ENCODE measurements at regions of chr7 and their contacts with region 1.

Region 1: GRCh38 chr7:36670585-36671431 is 53.5 kb downstream of the AOAH start:
- DNase-seq: peak; percentile 27
- H3K4me3 ChIP-seq: no peak overlapping the region
- H3K27ac ChIP-seq: no peak overlapping the region
- H3K27me3 ChIP-seq: peaks cover 2% of the 10 kb centered on the region
- CTCF ChIP-seq: peak; percentile 98

Region 2: GRCh38 chr7:36264123-36264801 is 406.5 kb before region 1 on chr7:
- CTCF ChIA-PET with region 1: no interaction called
- POLR2A ChIA-PET with region 1: no interaction called
- DNase-seq: no peak
- H3K4me3 ChIP-seq: no peak overlapping the region
- H3K27ac ChIP-seq: no peak overlapping the region
- H3K27me3 ChIP-seq: no peaks in the 10 kb centered on the region
- CTCF ChIP-seq: no peak

Region 3: GRCh38 chr7:36456548-36456947 is 214.3 kb before region 1 on chr7:
- CTCF ChIA-PET with region 1: interaction called, 11 read pairs
- POLR2A ChIA-PET with region 1: no interaction called
- DNase-seq: no peak
- H3K4me3 ChIP-seq: no peak overlapping the region
- H3K27ac ChIP-seq: no peak overlapping the region
- H3K27me3 ChIP-seq: no peaks in the 10 kb centered on the region
- CTCF ChIP-seq: no peak

Region 4: GRCh38 chr7:36487756-36488336 is 183.0 kb before region 1 on chr7:
- CTCF ChIA-PET with region 1: interaction called, 282 read pairs
- POLR2A ChIA-PET with region 1: interaction called, 6 read pairs
- DNase-seq: peak; percentile 8
- H3K4me3 ChIP-seq: no peak overlapping the region
- H3K27ac ChIP-seq: no peak overlapping the region
- H3K27me3 ChIP-seq: peaks cover 9% of the 10 kb centered on the region
- CTCF ChIP-seq: peak; percentile 83

Region 5: DNA sequence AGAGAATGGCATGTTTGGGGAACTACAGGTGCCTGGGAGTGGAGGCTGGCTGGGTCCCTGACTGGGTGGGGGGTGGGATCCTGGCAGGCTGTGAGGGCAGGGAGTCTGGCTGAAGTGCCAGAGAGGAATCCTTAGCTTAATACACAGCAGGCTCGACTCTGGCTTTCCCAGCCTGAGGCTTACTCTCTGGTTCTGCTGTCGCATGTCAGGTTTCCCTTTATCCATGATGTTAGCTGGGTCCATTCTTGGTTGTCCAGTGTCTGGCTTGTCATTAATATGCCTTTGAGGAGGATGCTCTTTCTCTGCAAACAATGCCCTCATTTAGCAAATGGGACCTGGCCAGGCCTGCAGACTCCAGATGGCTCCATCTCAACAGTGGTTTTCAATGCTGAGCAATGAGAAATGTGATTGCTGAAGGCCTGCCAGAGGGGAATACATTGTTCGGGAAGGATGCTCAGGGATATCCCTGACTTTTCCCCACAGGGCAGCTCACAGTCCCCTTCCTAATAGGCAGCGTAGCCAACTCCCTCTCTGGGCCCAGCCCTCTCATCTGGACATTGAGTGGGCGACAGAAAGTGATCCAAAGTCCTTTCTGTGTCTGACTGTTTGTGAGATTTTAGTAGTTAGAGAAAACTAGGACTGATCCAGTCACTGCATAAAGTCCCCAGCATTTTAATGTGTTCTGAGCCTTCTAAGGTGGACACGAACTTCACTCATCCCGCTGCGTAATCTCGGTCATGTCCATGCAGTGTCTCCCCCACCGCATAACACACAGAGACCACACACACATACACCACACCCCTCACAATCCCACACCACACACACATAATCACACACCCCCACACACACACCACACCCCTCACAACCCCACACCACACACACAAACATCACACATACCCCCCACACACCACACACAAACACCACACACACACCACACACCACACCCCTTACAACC is 156.2 kb before region 1 on chr7:
- CTCF ChIA-PET with region 1: no interaction called
- POLR2A ChIA-PET with region 1: no interaction called
- DNase-seq: no peak
- H3K4me3 ChIP-seq: no peak overlapping the region
- H3K27ac ChIP-seq: no peak overlapping the region
- H3K27me3 ChIP-seq: no peaks in the 10 kb centered on the region
- CTCF ChIP-seq: no peak

Region 6: DNA sequence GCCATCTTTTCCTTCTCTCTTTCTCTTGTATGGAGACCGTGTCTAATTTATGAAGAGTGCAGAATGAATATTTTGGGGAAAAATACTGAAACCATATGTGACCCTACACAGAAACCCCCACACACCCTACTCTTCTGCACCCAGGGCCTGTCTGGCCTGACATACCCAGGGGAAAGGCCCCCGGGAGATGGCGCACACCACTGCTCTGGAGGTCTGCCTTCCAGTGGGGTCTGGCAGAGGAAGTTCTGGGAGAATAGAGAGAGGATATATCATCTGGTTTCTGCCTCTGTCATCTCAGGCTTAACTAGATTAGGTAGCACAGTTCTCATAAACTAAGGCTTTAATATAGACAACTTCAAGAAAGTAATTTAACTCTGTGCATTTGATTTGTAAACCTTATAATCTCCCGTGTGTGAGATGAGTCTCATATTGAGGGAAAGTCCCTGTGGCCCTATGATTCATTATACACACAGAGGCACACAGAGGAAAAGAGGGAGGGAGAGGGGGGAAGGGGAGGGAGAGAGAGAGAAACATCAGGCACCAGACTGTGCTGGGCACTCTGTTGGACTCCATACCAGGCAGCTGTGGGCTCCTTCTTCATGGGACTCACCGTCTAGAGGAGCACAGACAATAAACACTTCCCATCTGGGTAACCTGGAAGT is 69.8 kb before region 1 on chr7:
- CTCF ChIA-PET with region 1: no interaction called
- POLR2A ChIA-PET with region 1: no interaction called
- DNase-seq: peak; percentile 8
- H3K4me3 ChIP-seq: no peak overlapping the region
- H3K27ac ChIP-seq: no peak overlapping the region
- H3K27me3 ChIP-seq: no peaks in the 10 kb centered on the region
- CTCF ChIP-seq: no peak

Region 7: DNA sequence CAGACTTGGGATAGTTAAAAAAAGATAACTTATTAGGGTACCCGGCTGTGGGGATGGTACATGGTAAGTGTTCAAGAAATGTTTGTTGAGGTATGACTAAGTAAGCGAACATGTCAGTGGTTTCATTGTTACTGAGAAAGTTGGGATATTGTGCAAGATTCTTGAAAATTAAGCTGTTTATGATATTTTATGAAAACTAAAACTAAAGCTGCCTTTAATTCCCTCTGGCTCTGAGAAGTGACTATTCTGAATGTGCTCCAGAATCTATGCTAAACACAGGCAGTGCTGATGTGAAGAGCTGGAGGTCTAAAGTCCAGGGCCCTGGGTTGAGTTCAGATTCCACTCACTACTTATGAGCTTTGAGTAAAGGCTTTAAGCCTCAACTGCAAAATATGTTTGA is 19.4 kb before region 1 on chr7:
- CTCF ChIA-PET with region 1: interaction called, 16 read pairs
- POLR2A ChIA-PET with region 1: no interaction called
- DNase-seq: peak; percentile 39
- H3K4me3 ChIP-seq: no peak overlapping the region
- H3K27ac ChIP-seq: no peak overlapping the region
- H3K27me3 ChIP-seq: no peaks in the 10 kb centered on the region
- CTCF ChIP-seq: no peak

Region 8: DNA sequence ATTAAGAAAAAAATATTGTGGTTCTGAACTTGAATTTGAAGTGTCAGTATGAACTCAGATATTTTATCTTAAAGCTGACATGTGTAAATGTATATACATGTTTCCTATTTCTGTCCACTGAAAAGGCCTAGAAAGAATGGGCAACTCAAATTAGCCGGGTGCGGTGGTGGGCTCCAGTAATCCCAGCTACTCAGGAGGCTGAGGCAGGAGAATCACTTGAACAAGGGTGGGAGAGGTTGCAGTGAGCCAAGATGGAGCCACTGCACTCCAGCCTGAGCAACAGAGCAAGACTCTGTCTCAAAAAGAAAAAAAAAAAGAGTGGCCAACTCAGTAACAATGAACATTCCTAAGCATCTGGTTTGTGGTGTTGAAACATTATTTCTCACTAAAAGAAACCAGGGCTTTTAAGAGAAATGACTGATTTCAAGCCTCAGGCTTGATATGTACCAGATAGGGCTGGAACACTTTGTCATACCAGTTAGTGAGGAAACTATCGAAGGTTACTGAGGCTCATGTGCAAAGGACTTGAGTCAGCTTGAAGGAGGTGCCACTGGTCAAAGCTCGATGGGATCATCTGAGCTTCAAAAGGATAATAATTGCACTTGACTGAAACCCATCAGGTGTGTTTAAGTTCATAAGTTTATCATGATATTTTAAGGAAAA is 13.0 kb after region 1 on chr7:
- CTCF ChIA-PET with region 1: interaction called, 29 read pairs
- POLR2A ChIA-PET with region 1: no interaction called
- DNase-seq: no peak
- H3K4me3 ChIP-seq: no peak overlapping the region
- H3K27ac ChIP-seq: no peak overlapping the region
- H3K27me3 ChIP-seq: no peaks in the 10 kb centered on the region
- CTCF ChIP-seq: no peak

Measured in AG04450 (cell line).